ENCODE measurements at regions of chr1 and their contacts with region 1.

Region 1: GRCh38 chr1:241611063-241611462 is 29.1 kb downstream of the CHML start:
- DNase-seq: no peak
- H3K4me3 Mint-ChIP-seq: no peak overlapping the region
- H3K27ac Mint-ChIP-seq: no peak overlapping the region
- H3K4me1 Mint-ChIP-seq: peaks cover 11% of the 10 kb centered on the region
- H3K27me3 Mint-ChIP-seq: no peaks in the 10 kb centered on the region

Region 2: DNA sequence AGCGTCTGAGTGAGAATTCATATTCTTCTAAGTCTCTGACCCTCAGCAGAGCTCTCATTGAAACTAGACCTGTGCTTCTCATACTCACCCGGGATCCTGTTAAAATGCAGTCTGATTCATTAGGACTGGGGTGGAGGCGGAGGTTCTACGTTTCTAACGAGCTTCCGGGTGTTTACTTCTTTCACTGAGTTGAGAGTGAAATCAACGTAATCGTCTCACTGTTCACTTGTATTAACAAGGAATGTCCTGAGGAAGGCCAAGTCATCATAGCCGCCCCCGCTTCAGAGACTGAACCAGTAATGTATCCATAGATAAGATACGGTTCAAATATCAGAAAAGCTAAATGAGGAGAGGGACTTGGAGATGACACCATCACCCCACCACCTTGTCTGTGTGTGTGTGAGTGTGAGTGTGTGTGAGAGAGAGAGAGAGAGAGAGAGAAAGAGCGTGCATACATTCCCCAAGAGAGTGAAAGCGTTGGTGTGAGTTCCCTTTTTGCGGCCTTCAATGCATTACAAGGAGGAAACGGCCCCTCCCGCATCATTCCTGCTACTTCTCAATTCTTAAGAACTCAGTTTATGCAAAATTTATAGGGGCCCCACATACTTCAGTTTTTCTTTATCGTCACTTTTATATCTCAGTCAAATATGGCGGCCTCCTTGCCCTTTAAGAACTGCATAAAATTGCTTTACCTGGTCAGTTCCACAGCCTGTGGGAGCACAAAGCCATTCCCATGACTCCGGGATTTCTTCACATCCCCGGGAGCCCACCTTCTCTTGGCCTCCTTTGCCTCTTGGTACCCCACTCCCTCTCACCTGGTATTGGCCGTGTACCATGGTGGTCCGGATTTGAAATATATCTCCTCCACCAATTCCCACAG is 59.1 kb before region 1 on chr1:
- CTCF ChIA-PET with region 1: interaction called, 7 read pairs
- POLR2A ChIA-PET with region 1: no interaction called
- intact Hi-C with region 1: loop called (anchors 1 kb)
- DNase-seq: peak; percentile 71
- H3K4me3 Mint-ChIP-seq: peak overlapping the region; percentile 68
- H3K27ac Mint-ChIP-seq: peak overlapping the region; percentile 96
- H3K4me1 Mint-ChIP-seq: peaks cover 23% of the 10 kb centered on the region
- H3K27me3 Mint-ChIP-seq: no peaks in the 10 kb centered on the region

Region 3: DNA sequence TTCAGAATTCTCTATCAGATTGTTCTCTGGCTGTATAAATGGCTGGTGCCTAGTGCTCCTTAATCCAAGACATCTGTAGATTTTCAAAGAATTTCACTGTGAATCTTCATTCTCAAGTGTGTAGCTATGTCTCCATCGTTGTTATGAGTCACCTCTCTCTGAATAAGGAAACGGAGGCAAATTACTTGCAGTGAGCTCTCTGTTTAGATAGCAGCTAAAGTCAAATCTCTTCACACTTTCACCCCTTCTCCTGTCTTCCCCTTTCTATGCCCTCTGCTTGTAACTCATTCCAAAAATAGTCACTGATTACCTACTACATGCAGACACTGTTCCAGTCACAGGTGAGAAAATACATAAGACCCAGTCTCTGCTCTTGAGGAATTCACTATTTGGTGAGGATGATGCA is 10.6 kb before region 1 on chr1:
- CTCF ChIA-PET with region 1: interaction called, 5 read pairs
- POLR2A ChIA-PET with region 1: no interaction called
- intact Hi-C with region 1: loop called (anchors 1 kb)
- DNase-seq: no peak
- H3K4me3 Mint-ChIP-seq: no peak overlapping the region
- H3K27ac Mint-ChIP-seq: no peak overlapping the region
- H3K4me1 Mint-ChIP-seq: peaks cover 18% of the 10 kb centered on the region
- H3K27me3 Mint-ChIP-seq: no peaks in the 10 kb centered on the region

Region 4: GRCh38 chr1:241640029-241640818 is 29.2 kb after region 1 on chr1 and contains the starts of genes CHML and OPN3:
- CTCF ChIA-PET with region 1: interaction called, 5 read pairs
- POLR2A ChIA-PET with region 1: interaction called, 4 read pairs
- intact Hi-C with region 1: loop called (anchors 1 kb)
- DNase-seq: peak; percentile 95
- H3K4me3 Mint-ChIP-seq: peak within 1 kb of the TSS; percentile 85
- H3K27ac Mint-ChIP-seq: peak within 1 kb of the TSS; percentile 68
- H3K4me1 Mint-ChIP-seq: peaks cover 44% of the 10 kb centered on the region
- H3K27me3 Mint-ChIP-seq: no peaks in the 10 kb centered on the region
- total RNA-seq, gene CHML: 12.5 to 13.8 TPM
- total RNA-seq, gene OPN3: 8.0 to 9.0 TPM

Region 5: GRCh38 chr1:241847796-241848685 is 237.0 kb after region 1 on chr1 and contains the start of gene EXO1:
- CTCF ChIA-PET with region 1: interaction called, 11 read pairs
- POLR2A ChIA-PET with region 1: no interaction called
- intact Hi-C with region 1: loop called (anchors 1 kb)
- DNase-seq: peak; percentile 93
- H3K4me3 Mint-ChIP-seq: peak within 1 kb of the TSS; percentile 91
- H3K27ac Mint-ChIP-seq: peak within 1 kb of the TSS; percentile 99
- H3K4me1 Mint-ChIP-seq: peaks cover 22% of the 10 kb centered on the region
- H3K27me3 Mint-ChIP-seq: no peaks in the 10 kb centered on the region
- total RNA-seq, gene EXO1: 44.3 to 50.0 TPM

Region 6: GRCh38 chr1:241883159-241883558 is 272.1 kb after region 1 on chr1:
- CTCF ChIA-PET with region 1: no interaction called
- POLR2A ChIA-PET with region 1: no interaction called
- intact Hi-C with region 1: no loop called
- DNase-seq: no peak
- H3K4me3 Mint-ChIP-seq: no peak overlapping the region
- H3K27ac Mint-ChIP-seq: no peak overlapping the region
- H3K4me1 Mint-ChIP-seq: peaks cover under 1% of the 10 kb centered on the region
- H3K27me3 Mint-ChIP-seq: no peaks in the 10 kb centered on the region

Region 7: DNA sequence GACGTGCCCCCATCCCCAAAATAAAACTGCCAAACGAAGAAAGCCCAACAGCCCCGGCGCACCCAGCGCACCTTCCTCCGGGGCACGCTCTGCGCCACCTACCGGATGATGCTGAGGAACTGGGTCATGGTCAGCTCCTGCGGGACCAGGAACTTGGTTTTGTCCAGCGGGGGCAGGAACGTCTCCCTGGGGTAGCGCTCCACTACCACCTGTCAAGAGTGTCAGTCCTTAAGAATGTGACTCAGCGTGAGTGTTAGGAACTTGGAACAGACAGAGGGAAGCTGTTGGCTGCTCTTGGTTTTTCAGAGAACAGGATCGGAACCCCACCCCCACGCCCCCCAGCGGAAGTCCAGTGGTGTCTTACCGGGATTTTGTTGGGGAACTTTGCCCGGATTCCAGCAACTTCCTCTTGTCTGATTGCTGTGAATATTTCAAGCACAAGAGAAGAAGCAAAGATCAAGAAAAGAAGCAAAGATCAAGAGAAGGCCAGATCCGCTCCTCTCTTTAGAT is 387.4 kb after region 1 on chr1:
- CTCF ChIA-PET with region 1: interaction called, 60 read pairs
- POLR2A ChIA-PET with region 1: no interaction called
- intact Hi-C with region 1: loop called (anchors 2 kb)
- DNase-seq: peak; percentile 67
- H3K4me3 Mint-ChIP-seq: peak overlapping the region; percentile 57
- H3K27ac Mint-ChIP-seq: no peak overlapping the region
- H3K4me1 Mint-ChIP-seq: peaks cover 5% of the 10 kb centered on the region
- H3K27me3 Mint-ChIP-seq: peaks cover 2% of the 10 kb centered on the region

Measured in activated CD4-positive, alpha-beta memory T cell treated with anti-CD3 and anti-CD28 coated beads for 36 hours (primary cell).